ENCODE measurements at regions of chr12 and their contacts with region 1.

Region 1: GRCh38 chr12:92445253-92446082 is 257.3 kb upstream of the PLEKHG7 start:
- DNase-seq: peak; percentile 40
- CTCF ChIP-seq: no peak

Region 2: DNA sequence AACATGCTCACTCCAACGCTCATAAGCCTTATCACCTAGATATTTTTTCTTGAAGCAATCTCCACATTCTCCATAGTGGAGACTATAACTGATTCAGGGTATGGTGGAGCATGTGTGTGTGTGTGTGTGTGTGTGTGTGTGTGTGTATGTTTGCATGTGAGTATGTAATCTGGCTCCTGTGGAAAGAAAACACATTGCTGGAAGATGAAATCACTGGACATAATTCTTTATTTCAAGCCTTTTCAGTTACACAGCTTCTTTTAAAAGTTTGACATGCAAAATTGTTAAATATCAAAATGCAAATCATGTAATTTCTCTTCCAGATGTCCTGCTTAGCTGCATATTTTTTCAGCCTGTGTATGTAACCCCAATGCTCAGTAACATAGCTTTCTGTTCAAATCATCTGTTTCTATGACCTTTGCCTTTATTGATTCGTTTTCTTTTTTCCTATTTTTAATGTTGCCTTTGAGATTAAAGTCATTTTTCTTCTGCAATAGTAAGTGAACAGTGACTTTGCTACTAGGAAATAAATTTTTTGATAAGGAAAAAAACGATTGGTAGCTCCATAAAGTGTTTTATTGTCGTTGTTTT is 219.3 kb before region 1 on chr12:
- CTCF ChIA-PET with region 1: no interaction called
- POLR2A ChIA-PET with region 1: no interaction called
- DNase-seq: no peak
- CTCF ChIP-seq: no peak

Region 3: DNA sequence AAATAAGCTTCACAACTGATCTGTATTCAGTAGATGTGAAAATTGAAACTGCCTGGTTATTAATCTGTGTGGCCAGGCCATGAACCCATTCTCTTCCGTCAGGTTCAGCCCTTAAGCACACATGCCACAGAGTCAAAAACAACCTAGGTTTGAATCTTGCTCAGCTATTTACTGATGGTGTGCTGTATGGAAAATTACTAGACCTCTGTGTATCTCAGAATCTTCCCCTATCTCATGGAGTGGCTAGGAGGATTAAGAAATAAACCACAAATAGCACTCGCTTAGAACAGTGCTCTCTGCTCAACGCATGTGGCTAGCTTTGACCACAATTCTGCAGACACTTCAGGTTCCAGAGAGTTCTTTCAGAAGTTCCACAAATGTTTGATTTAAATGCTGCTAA is 16.6 kb after region 1 on chr12:
- CTCF ChIA-PET with region 1: interaction called, 15 read pairs
- POLR2A ChIA-PET with region 1: no interaction called
- DNase-seq: no peak
- CTCF ChIP-seq: no peak

Region 4: DNA sequence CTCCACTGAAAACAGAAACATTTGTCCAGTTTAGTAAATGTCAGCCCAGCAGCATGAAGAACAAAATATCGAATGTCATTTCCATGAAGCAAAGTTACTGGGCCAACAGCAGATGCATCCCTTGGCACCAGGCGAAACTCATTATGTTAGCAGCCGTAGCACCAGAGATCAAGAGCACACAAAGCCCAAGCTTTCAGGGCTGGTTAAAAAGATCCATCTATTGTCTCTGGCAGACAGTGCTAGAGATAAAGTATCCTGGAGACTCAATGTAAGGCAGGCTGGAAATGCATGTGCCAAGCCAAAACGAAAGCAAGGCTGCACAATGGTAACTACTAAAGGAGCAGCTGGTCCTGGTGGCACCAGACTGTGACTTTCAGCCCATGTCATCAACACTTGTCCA is 137.0 kb after region 1 on chr12:
- CTCF ChIA-PET with region 1: no interaction called
- POLR2A ChIA-PET with region 1: no interaction called
- DNase-seq: no peak
- CTCF ChIP-seq: no peak

Measured in GM10248 (cell line).